Head of caudate nucleus (tissue), 42 donors: ENCODE measurements at regions of chr10 and their contacts with region 1.

Region 1: DNA sequence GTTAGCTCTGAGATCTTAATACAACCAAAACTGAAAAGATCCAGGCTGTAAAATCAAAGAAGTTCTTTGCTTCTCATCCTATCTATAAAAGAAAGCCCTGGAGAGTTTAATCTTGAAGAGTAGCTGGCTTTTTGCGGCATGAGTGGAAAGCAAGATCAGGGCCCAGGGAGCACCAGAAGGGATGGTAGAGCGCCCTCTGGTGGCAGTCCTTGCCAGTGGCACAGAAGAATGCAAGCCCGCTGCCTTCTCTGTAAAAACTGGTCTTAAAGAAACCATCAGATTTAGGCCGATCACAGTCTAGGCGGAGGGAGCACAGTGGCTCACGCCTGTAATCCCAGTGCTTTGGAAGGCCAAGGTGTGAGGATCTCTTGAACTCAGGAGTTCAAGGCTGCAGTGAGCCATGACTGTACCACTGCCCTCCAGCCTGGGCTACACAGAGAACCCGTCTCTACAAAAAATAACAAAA is 35.6 kb downstream of the CPN1 start:
- DNase-seq: peak; percentile 64 to 94 (median 87)

Region 2: DNA sequence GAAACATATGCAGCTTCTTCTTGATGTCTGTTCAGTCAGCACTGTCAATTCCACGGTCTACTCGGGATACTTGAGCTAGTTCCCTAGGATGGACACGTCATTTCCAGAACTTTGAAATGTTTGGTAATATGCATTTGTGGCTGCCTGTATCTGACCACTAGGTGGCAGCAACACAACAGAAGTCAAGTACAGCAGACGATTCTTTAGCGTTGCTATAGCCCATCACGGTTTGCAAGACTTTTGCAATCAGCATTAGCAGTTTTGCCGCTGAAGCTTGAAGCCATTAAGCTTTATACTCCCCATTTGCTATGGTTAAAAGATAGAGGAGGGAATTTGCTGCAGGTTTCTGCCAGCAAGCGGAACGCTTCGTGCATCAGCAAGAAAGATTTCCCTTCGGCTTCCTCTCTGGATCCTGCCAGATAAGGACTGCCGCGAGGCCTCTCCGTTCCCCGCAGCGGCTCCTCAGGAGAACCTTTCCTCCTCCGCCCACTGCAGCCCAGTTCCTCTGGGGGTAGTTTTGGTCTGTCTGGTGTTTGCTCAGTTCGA is 200.1 kb before region 1 on chr10:
- intact Hi-C with region 1: loop called (anchors 5 kb)
- DNase-seq: peak; percentile 31 to 91 (median 78)